ENCODE measurements at regions of chr1 and their contacts with region 1.

Region 1: DNA sequence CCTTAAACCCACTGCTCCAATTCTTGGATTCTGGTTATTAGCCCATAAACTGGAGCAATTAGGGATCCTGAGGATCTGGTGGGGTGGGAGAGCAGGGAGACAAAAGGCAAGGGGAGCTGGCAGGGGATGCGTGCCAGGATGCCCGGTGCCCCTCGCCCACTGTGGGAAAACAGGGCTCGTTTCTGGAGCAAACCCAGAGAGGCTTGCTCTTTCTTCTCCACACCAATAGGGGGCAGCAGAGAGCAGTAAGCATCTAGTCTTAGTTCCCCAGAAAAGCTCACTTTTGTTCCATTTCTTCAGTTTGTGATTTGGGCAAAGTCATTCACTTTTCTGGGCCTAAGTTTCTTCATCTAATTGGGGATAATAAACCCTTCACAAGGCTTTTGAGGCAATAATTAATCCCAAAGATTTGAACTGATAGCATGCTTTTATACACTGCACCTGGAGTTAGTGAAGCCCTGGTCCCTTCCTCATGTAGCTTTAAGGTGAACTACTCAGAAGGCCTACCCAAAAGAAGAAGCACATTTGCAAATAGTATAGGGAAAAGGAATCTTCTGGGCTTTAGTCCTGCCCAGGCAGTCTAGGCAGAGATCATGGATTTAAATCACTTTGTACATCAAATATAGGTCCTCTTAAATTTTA is 160.6 kb upstream of the USP24 start:
- DNase-seq: no peak
- H3K4me3 ChIP-seq: no peak overlapping the region
- H3K27ac ChIP-seq: no peak overlapping the region
- H3K4me1 ChIP-seq: no peaks in the 10 kb centered on the region
- H3K27me3 ChIP-seq: no peaks in the 10 kb centered on the region
- CTCF ChIP-seq: peak; percentile 74 to 95 (median 90)

Region 2: GRCh38 chr1:55277377-55278130 is 98.2 kb before region 1 on chr1:
- intact Hi-C with region 1: no loop called
- DNase-seq: peak in 1 of 2 donors; percentile 89
- H3K4me3 ChIP-seq: no peak overlapping the region
- H3K27ac ChIP-seq: no peak overlapping the region
- H3K4me1 ChIP-seq: peaks cover 0 to 6% of the 10 kb centered on the region in 2 donors
- H3K27me3 ChIP-seq: no peaks in the 10 kb centered on the region
- CTCF ChIP-seq: peak; percentile 68 to 80 (median 74)

Region 3: GRCh38 chr1:55483523-55483922 is 107.8 kb after region 1 on chr1:
- intact Hi-C with region 1: loop called (anchors 10 kb)
- DNase-seq: no peak
- H3K4me3 ChIP-seq: no peak overlapping the region
- H3K27ac ChIP-seq: no peak overlapping the region
- H3K4me1 ChIP-seq: no peaks in the 10 kb centered on the region
- H3K27me3 ChIP-seq: no peaks in the 10 kb centered on the region
- CTCF ChIP-seq: no peak

Region 4: GRCh38 chr1:55650444-55650843 is 274.7 kb after region 1 on chr1:
- intact Hi-C with region 1: no loop called
- DNase-seq: no peak
- H3K4me3 ChIP-seq: no peak overlapping the region
- H3K27ac ChIP-seq: peak overlapping the region; percentile 51 to 62
- H3K4me1 ChIP-seq: peaks cover 0 to 6% of the 10 kb centered on the region in 2 donors
- H3K27me3 ChIP-seq: no peaks in the 10 kb centered on the region
- CTCF ChIP-seq: no peak

Region 5: GRCh38 chr1:56411484-56412180 is 1035.9 kb after region 1 on chr1:
- intact Hi-C with region 1: loop called (anchors 10 kb)
- DNase-seq: peak in 1 of 2 donors; percentile 80
- H3K4me3 ChIP-seq: no peak overlapping the region
- H3K27ac ChIP-seq: peak overlapping the region; percentile 15 to 62
- H3K4me1 ChIP-seq: peaks cover 0 to 2% of the 10 kb centered on the region in 2 donors
- H3K27me3 ChIP-seq: no peaks in the 10 kb centered on the region
- CTCF ChIP-seq: peak; percentile 32 to 57 (median 32)

Measured in ascending aorta (tissue), 2 donors.